Activated CD8-positive, alpha-beta T cell treated with anti-CD3 and anti-CD28 coated beads, Interleukin-2, amount 10 ng/mL, durations not matched to agents 7 days and 5 days (primary cell): ENCODE measurements at regions of chr3 and their contacts with region 1.

Region 1: DNA sequence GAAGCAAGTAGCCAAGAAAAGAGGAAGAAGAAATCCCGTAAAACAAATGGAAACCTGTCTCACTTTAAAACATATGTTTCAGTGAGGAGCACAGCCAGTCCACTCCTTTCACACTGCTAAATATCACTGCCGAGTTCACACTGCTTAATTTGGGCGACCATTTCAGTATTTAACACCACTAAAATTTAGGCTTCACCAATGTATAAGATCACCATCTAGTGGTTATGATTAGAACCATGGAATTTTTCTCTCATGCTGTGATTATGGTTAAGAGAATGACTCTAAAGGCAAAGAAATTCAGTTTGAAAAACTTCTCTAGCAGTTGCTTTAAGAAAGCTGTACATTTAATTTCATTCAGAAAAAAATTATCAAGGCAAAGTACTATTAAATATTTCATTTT is 16.6 kb downstream of the SLC4A7 start:
- DNase-seq: peak; percentile 28
- ATAC-seq: peak; percentile 84
- H3K4me3 Mint-ChIP-seq: no peak overlapping the region
- H3K27ac Mint-ChIP-seq: no peak overlapping the region
- H3K4me1 Mint-ChIP-seq: peaks cover 6% of the 10 kb centered on the region
- H3K27me3 Mint-ChIP-seq: no peaks in the 10 kb centered on the region

Region 2: GRCh38 chr3:27134165-27134796 is 333.3 kb before region 1 on chr3:
- CTCF ChIA-PET with region 1: interaction called, 11 read pairs
- POLR2A ChIA-PET with region 1: no interaction called
- DNase-seq: peak; percentile 72
- ATAC-seq: peak; percentile 61
- H3K4me3 Mint-ChIP-seq: no peak overlapping the region
- H3K27ac Mint-ChIP-seq: no peak overlapping the region
- H3K4me1 Mint-ChIP-seq: no peaks in the 10 kb centered on the region
- H3K27me3 Mint-ChIP-seq: no peaks in the 10 kb centered on the region

Region 3: GRCh38 chr3:27312044-27312668 is 155.4 kb before region 1 on chr3:
- CTCF ChIA-PET with region 1: interaction called, 14 read pairs
- POLR2A ChIA-PET with region 1: no interaction called
- DNase-seq: peak; percentile 22
- ATAC-seq: peak; percentile 64
- H3K4me3 Mint-ChIP-seq: no peak overlapping the region
- H3K27ac Mint-ChIP-seq: no peak overlapping the region
- H3K4me1 Mint-ChIP-seq: no peaks in the 10 kb centered on the region
- H3K27me3 Mint-ChIP-seq: peaks cover 6% of the 10 kb centered on the region

Region 4: DNA sequence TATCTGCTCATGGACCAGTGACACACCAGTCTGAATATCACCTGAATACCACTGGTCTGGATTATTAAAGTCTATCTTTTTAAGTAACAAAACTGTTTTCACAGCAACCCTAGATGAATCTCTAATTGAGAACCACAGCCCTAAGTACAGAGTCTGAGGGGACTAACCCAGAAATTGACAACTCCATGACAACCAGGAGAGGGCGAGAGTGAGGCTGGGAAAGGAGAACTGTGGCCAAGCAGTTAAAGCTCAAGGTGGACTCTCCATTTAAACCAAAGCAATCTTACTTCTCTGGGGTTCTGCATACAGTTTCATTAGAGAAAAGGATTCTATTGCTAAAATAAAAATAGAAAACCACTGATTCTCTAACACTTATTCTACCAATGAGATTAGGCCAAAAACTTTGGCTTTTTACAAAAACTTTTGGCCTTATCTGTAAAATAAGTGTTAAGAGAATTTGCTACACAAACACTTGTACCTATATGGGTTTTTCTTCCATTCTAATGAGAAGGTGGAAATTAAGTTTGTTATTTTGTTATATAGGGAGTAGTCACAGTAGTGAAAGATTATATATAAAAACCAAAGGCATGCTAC is 109.8 kb before region 1 on chr3:
- CTCF ChIA-PET with region 1: interaction called, 11 read pairs
- POLR2A ChIA-PET with region 1: no interaction called
- DNase-seq: peak; percentile 77
- ATAC-seq: peak; percentile 91
- H3K4me3 Mint-ChIP-seq: no peak overlapping the region
- H3K27ac Mint-ChIP-seq: no peak overlapping the region
- H3K4me1 Mint-ChIP-seq: peaks cover 29% of the 10 kb centered on the region
- H3K27me3 Mint-ChIP-seq: peaks cover 15% of the 10 kb centered on the region

Region 5: GRCh38 chr3:27431116-27431515 is 36.4 kb before region 1 on chr3:
- CTCF ChIA-PET with region 1: no interaction called
- POLR2A ChIA-PET with region 1: no interaction called
- DNase-seq: no peak
- ATAC-seq: no peak
- H3K4me3 Mint-ChIP-seq: no peak overlapping the region
- H3K27ac Mint-ChIP-seq: no peak overlapping the region
- H3K4me1 Mint-ChIP-seq: no peaks in the 10 kb centered on the region
- H3K27me3 Mint-ChIP-seq: no peaks in the 10 kb centered on the region

Region 6: DNA sequence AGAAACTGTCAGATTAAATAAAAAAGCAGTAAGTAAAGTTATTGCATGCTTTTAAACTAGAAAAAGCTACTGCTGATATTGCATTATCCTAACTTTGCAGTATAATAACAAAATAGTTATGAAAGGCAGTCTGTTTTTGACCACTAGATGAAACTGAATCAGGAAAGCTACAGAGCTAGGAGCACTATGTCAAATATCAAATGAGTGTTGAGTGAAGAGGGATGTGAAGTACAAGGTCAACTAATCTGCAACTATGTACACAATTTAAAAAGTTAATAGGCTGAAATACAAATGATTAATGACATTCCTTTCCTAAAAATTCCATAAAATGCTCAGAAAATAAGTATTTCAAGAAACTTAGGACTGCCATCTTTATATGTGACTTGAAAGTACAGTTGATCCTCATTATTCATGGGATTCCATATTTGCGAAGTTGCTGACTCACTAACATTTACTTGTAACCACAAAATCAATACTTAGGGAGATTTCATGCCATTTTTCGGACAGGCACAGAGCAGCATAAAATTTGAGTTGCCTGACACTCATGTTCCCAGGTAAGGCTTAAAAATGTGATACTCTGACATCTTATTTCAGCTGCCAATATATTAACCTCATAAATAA is 17.9 kb before region 1 on chr3:
- CTCF ChIA-PET with region 1: interaction called, 22 read pairs
- POLR2A ChIA-PET with region 1: no interaction called
- DNase-seq: no peak
- ATAC-seq: no peak
- H3K4me3 Mint-ChIP-seq: no peak overlapping the region
- H3K27ac Mint-ChIP-seq: no peak overlapping the region
- H3K4me1 Mint-ChIP-seq: peaks cover 19% of the 10 kb centered on the region
- H3K27me3 Mint-ChIP-seq: no peaks in the 10 kb centered on the region

Region 7: DNA sequence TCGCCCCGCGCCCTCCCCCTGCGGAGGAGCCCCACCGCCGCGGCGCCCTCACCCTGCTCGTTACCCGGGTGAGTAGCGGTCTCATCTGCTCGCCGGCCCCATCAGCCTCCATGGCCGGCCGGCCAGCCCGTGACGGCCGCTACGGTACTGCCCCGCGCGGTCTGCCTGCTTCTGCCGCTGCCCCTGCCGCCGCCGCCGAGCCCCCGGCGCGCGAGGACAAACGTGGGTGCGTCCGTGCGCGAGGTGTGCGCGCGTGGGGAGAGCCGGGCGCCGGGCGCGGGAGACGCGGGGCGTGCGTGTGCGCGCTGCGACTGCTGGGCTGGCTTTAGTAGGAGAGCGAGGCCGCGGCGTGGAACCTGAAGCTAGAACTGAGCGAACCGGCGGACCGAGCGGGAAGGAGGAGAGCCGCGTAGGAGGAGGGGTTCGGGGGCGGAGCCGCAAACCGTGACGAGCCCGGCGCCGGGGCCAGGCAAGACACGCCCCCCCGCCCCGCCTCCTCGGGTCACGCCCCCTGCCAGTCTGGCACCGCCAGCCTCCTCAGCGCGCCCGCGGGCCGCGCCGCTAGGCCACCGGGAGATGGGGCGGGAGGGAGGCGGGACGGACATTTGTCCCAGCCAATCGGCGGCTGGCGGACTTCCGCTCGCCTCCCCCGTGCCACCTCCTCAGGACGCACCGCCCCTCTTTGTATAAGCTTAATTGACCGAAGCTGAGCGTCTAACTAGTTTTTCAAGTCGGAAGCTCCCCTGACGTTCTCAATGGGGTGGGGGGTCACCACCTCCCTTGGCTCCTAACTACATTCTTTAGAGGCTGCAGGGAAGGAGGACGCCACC is 16.7 kb after region 1 on chr3 and contains the start of gene SLC4A7:
- CTCF ChIA-PET with region 1: interaction called, 14 read pairs
- POLR2A ChIA-PET with region 1: interaction called, 6 read pairs
- DNase-seq: peak; percentile 98
- ATAC-seq: peak; percentile 94
- H3K4me3 Mint-ChIP-seq: peak within 1 kb of the TSS; percentile 100
- H3K27ac Mint-ChIP-seq: peak within 1 kb of the TSS; percentile 98
- H3K4me1 Mint-ChIP-seq: peaks cover 39% of the 10 kb centered on the region
- H3K27me3 Mint-ChIP-seq: no peaks in the 10 kb centered on the region
- total RNA-seq, gene SLC4A7: 31.9 to 32.9 TPM

Region 8: GRCh38 chr3:27681245-27681748 is 213.8 kb after region 1 on chr3:
- CTCF ChIA-PET with region 1: interaction called, 15 read pairs
- POLR2A ChIA-PET with region 1: no interaction called
- DNase-seq: peak; percentile 56
- ATAC-seq: peak; percentile 80
- H3K4me3 Mint-ChIP-seq: peak overlapping the region; percentile 54
- H3K27ac Mint-ChIP-seq: peak overlapping the region; percentile 35
- H3K4me1 Mint-ChIP-seq: peaks cover 10% of the 10 kb centered on the region
- H3K27me3 Mint-ChIP-seq: peaks cover 9% of the 10 kb centered on the region